Spleen (tissue), 13 donors: ENCODE measurements at regions of chr13 and their contacts with region 1.

Region 1: GRCh38 chr13:46553886-46554858 is 1.2 kb downstream of the LRCH1 start:
- DNase-seq: peak; percentile 93
- H3K4me3 ChIP-seq: peak overlapping the region; percentile 76 to 100 (median 98)
- H3K27ac ChIP-seq: peak overlapping the region; percentile 76 to 94 (median 92)
- H3K4me1 ChIP-seq: peaks cover 17 to 71% (median 53%) of the 10 kb centered on the region in 6 donors
- H3K27me3 ChIP-seq: no peaks in the 10 kb centered on the region
- CTCF ChIP-seq: peak in 9 of 11 experiments; percentile 23 to 46 (median 36)
- POLR2A ChIP-seq: no peak

Region 2: DNA sequence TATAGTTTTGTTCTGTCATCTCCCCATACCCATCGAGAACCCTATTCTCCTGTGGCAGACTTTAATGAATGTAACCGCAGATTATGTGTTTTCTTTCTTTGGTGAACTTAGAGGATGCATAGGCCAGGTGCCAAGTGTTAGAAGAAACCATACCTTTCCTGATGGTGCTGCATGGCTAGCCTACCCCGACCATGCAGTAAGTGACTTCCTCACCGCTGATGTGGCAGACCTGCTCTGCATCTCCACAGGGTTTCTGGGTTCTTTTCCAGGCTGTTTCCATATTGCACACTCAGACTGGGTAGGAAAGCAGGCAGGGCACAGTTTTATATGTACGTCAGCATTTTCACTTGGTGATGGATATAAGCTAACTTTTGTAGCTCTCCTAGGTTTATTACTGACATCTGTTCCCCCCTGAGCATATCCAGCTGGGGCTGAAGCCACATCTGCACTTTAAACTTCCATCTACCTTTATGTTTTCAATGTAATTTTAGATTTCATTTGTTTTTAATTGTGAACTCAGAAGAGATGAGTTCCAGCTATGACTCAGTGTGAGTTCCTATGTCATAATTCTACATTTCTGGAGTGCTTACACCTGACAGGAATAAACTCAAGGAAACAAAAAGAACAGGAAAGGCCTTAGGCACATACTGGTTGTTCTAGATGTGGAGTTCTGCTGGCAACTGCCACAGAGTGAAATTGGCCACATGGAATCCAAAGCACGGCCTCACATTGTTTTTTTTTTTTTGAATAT is 41.1 kb after region 1 on chr13:
- intact Hi-C with region 1: loop called (anchors 5 kb)
- DNase-seq: no peak
- H3K4me3 ChIP-seq: peak overlapping the region in 1 of 8 donors; percentile 30
- H3K27ac ChIP-seq: peak overlapping the region; percentile 47 to 85 (median 80)
- H3K4me1 ChIP-seq: peaks cover 82 to 100% (median 91%) of the 10 kb centered on the region in 6 donors
- H3K27me3 ChIP-seq: no peaks in the 10 kb centered on the region
- CTCF ChIP-seq: no peak
- POLR2A ChIP-seq: no peak

Region 3: GRCh38 chr13:46668302-46668720 is 114.1 kb after region 1 on chr13:
- intact Hi-C with region 1: no loop called
- DNase-seq: no peak
- H3K4me3 ChIP-seq: peak overlapping the region in 7 of 8 donors; percentile 7 to 53 (median 25)
- H3K27ac ChIP-seq: peak overlapping the region; percentile 53 to 84 (median 82)
- H3K4me1 ChIP-seq: peaks cover 30 to 84% (median 53%) of the 10 kb centered on the region in 6 donors
- H3K27me3 ChIP-seq: no peaks in the 10 kb centered on the region
- CTCF ChIP-seq: no peak
- POLR2A ChIP-seq: no peak

Region 4: DNA sequence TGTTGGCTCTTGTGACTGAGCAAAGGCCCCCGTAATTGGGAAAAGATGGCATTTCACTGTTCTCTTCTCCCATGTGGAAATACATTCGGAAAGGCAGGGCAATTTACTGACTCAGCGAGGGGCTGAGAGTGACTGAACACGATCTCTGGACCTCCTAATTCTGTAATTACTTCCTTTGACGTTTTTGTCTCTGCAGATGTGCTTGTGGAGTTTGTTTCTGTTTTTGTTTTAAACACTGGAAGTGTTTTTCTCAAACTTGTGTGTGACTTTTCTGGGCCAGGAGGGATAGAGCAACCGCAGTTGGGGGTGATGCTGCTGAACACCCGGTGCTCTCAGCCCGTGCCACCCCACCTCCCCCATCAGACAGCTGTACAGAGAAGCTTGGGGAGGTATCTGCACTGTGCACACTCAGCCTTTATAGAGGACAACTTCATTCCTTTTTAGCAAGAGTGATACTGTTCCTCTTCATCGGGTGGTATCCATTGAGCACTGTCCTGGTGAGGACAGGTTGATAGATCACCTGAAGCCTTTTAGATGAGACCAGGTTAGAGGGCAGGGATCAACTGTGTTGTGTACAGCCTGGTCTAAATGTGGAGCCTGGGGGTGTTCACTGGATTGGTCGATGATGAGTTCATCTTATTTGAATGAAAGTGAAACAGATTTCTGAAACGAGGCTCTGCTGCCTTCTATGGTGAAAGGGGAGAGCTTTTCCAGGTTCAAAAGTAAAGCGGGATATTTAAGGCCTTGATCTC is 125.4 kb after region 1 on chr13:
- intact Hi-C with region 1: loop called (anchors 10 kb)
- DNase-seq: peak; percentile 84
- H3K4me3 ChIP-seq: peak overlapping the region in 4 of 8 donors; percentile 14 to 54 (median 27)
- H3K27ac ChIP-seq: peak overlapping the region; percentile 71 to 89 (median 82)
- H3K4me1 ChIP-seq: peaks cover 26 to 86% (median 54%) of the 10 kb centered on the region in 6 donors
- H3K27me3 ChIP-seq: no peaks in the 10 kb centered on the region
- CTCF ChIP-seq: peak in 4 of 11 experiments; percentile 10 to 21 (median 20)
- POLR2A ChIP-seq: no peak

Region 5: DNA sequence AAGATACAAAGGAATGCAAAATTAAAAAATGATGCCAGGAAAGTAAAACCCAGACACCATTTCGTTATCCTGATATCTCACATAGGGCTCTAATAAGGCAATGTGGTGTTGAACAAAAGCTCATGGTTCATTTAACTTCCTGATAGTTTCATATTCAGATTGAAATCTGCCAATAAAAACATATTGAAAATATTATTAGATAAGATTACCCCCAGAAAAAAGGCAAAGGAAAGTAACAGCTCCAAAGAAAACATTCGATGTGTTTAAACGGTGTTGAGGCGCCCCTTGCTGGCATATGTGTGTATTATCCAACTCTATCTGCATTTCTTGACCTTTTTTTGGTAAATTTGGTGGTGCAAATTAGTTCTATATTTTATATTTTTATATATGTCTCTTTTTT is 166.9 kb after region 1 on chr13:
- intact Hi-C with region 1: loop called (anchors 2 kb)
- DNase-seq: no peak
- H3K4me3 ChIP-seq: no peak overlapping the region
- H3K27ac ChIP-seq: no peak overlapping the region
- H3K4me1 ChIP-seq: peaks cover 0 to 20% (median 7%) of the 10 kb centered on the region in 6 donors
- H3K27me3 ChIP-seq: no peaks in the 10 kb centered on the region
- CTCF ChIP-seq: peak; percentile 46 to 78 (median 63)
- POLR2A ChIP-seq: no peak

Region 6: DNA sequence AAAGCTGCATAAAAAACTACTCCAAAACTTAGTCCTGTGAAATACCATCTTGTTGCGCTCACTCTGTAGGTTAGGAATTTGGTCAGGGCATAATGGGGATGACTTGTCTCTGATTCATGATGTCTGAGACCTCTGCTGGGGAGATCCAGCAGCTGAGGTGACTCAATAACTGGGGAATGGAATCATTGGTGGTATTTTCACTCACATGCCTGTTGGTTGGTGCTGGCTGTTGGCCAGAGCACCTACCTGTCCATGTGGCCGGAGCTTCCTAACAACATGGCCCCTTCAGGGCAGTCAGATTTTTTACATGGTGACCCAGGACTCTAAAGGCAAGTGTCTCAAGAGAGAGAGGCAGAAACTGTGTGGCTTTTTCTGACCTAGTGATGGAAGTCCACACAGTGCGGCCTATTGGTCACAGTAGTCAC is 250.2 kb after region 1 on chr13:
- intact Hi-C with region 1: no loop called
- DNase-seq: no peak
- H3K4me3 ChIP-seq: no peak overlapping the region
- H3K27ac ChIP-seq: no peak overlapping the region
- H3K4me1 ChIP-seq: no peaks in the 10 kb centered on the region
- H3K27me3 ChIP-seq: peaks cover 0 to under 1% (median 0%) of the 10 kb centered on the region in 7 donors
- CTCF ChIP-seq: no peak
- POLR2A ChIP-seq: no peak